Ovary (tissue), 10 donors: ENCODE measurements at regions of chr20 and their contacts with region 1.

Region 1: DNA sequence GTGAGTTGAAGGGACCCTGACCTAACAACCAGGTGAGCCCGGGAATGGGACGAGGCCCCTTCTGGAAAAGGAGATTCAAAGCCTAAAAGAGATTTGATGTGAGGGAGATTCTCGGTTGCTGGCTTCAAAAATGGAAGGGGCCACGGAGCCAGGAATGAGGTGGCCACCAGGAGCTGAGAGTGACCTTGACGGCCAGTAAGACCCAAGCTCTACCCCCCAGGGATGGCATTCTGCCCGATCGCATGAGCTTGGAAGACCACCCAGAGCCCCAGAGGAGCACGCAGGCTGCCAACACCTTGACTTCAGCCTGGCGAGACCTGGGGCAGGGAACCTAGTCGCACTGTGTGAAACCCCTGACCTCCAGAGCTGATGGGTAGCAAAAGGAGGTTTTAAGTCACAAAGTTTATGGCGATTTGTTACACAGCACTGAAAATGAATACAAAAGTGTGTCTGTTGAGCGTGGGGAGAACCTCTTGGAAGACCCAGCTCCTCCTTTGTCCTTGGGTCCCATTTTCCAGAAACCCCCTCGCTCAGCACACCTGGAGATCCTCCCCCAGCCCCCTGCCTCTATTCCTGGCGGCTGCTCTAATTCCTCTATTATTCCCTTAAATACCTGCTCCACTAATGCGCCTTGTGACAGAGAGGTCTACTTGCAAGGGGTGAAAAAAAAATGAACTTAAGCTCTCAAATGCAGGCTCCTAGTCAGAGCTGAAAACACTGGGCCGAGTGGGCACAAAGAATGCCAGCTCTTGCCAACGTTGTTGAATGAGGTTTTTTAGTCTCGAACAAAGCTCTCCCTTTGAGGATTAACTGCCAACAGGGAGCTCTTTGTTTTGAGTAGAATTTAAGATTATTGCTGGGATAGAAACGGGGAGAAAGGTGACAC is 163.6 kb downstream of the BMP7 start:
- DNase-seq: no peak
- H3K4me3 ChIP-seq: no peak overlapping the region
- H3K27ac ChIP-seq: no peak overlapping the region
- H3K4me1 ChIP-seq: no peaks in the 10 kb centered on the region
- H3K27me3 ChIP-seq: no peaks in the 10 kb centered on the region
- CTCF ChIP-seq: no peak
- EP300 ChIP-seq: no peak
- POLR2A ChIP-seq: no peak

Region 2: DNA sequence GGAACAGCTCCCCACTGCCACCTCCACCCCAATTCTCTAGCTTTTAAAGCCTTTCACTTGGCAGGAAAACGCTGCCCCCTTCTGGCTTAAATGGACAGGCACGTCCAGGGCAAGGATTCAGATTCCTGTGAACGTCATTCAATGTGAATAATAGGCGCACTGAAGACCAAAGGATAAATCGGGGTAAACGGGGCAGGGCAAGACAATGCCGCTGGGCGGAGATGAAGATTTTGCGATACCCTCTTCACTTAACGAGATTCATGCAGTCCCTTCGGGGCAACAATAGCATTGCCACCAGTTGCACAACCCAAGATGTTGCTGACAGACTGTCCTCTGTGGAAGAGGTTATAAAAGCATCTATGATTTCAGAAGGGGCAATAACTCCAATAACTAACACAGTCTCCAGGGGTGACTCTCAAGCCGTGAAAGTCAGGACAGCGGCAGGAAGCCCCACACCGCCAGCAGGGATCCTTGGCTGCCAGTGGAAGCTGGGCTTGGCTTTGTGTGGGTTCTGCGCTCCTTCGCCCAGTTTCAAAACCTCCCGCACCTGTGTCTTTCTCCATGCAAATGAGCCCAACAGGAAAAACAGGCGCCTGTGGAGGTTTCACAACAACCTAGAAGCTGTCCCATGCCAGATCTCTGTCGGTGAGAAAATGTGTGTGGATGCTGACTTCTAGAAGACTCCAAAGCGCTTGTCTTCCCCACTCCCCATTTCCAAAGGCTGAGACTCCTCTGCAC is 128.1 kb before region 1 on chr20:
- intact Hi-C with region 1: no loop called
- DNase-seq: no peak
- H3K4me3 ChIP-seq: no peak overlapping the region
- H3K27ac ChIP-seq: no peak overlapping the region
- H3K4me1 ChIP-seq: no peaks in the 10 kb centered on the region
- H3K27me3 ChIP-seq: no peaks in the 10 kb centered on the region
- CTCF ChIP-seq: no peak
- EP300 ChIP-seq: no peak
- POLR2A ChIP-seq: no peak

Region 3: DNA sequence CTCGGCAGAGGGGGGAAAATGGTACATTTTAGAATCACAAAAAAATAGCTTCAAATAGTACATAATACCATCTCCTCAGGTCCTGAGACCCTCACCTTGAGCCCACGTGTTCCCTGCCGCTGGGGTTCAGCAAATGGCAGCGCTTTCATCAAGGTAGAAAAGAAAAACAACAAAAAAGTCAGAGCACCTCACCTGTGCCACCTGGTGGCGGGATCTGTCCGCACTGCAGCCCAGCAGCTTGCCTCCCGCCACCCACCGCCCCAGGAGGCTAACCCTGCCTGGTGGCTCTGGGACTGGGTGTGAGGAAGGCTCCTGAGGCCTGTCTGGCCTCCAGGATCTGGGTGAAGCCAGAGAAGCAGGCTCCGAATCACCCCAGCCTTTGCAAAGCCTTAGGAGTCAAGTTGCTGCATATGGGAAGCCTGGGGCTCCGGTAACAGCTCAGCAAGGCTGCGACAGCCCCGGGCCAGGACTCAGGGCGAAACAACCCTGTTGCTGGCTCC is 107.2 kb before region 1 on chr20:
- intact Hi-C with region 1: no loop called
- DNase-seq: no peak
- H3K4me3 ChIP-seq: no peak overlapping the region
- H3K27ac ChIP-seq: no peak overlapping the region
- H3K4me1 ChIP-seq: no peaks in the 10 kb centered on the region
- H3K27me3 ChIP-seq: no peaks in the 10 kb centered on the region
- CTCF ChIP-seq: no peak
- EP300 ChIP-seq: no peak
- POLR2A ChIP-seq: no peak

Region 4: DNA sequence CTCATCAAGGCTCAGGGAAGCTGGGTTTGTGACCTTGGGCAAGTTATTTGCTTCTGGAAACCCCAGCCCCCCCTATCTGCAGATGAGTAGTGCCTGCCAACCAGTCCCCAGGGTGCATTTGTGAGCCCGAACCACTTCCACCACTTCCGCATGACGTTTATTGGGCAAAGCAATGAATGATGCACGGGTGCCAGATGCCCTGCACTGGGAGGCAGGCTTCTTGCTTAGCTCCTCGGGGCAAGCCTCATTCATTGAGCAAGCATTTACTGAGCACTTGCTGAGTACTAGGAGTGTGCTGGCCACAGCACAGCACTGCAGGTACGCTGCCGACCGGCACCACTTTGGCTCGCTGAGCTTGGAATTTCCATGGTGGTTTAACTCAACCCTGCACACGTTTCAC is 1687.6 kb after region 1 on chr20:
- intact Hi-C with region 1: loop called in 1 of 4 experiments (anchors 5 kb)
- DNase-seq: no peak
- H3K4me3 ChIP-seq: no peak overlapping the region
- H3K27ac ChIP-seq: no peak overlapping the region
- H3K4me1 ChIP-seq: no peaks in the 10 kb centered on the region
- H3K27me3 ChIP-seq: no peaks in the 10 kb centered on the region
- CTCF ChIP-seq: no peak
- EP300 ChIP-seq: no peak
- POLR2A ChIP-seq: no peak